ENCODE measurements at regions of chr13 and their contacts with region 1.

Region 1: GRCh38 chr13:42054798-42055499 is 6.5 kb downstream of the DGKH start:
- DNase-seq: no peak
- H3K4me3 ChIP-seq: no peak overlapping the region
- H3K4me3 Mint-ChIP-seq: no peak overlapping the region
- H3K27ac ChIP-seq: no peak overlapping the region
- H3K27ac Mint-ChIP-seq: no peak overlapping the region
- H3K4me1 ChIP-seq: peaks cover 18% of the 10 kb centered on the region
- H3K4me1 Mint-ChIP-seq: peaks cover 12 to 34% (median 17%) of the 10 kb centered on the region in 4 donors
- H3K27me3 ChIP-seq: no peaks in the 10 kb centered on the region
- H3K27me3 Mint-ChIP-seq: no peaks in the 10 kb centered on the region

Region 2: DNA sequence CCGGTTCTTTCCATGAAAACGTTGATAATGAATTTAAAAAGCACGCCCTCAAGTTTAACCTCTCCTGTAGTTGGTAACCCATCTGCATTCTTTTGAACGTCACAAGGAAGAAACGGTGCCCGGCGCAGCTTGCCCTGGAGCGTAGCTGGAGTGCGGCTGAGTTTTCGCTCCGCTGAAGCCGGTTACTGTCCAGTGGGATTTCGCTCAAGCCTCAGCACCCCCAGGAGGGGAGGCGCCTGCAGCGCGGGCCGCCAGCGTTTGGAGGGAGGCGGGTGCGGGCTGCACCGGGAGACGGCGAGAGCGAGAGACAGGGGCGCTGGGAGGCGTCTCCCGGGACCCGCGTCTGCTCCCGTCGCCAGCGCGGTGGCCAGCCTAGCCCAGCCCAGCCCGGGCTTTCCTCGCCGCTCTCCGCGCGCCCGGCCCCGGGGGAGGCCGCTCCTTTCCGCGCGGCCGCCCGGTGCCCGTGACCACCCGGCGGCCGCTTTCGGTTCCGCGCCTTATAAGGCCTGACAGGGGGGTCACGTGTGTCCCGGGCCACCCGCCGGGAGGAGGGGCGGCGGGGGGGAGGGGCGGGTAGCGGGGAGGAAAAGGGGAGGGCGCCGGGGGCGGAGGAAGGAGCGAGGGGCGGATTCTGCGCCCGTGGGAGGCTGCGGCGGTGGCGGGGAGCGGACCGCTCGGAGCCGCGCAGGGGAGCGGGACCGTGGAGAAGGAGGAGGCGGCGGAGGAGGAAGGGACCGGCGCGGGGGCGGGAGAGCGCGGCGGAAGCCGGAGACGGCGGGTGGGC is 14.8 kb before region 1 on chr13:
- CTCF ChIA-PET with region 1: no interaction called
- POLR2A ChIA-PET with region 1: no interaction called
- intact Hi-C with region 1: loop called (anchors 1 kb)
- DNase-seq: peak; percentile 84 to 87 (median 86)
- H3K4me3 ChIP-seq: peak overlapping the region; percentile 58 to 82
- H3K4me3 Mint-ChIP-seq: peak overlapping the region; percentile 84 to 94 (median 92)
- H3K27ac ChIP-seq: peak overlapping the region; percentile 65
- H3K27ac Mint-ChIP-seq: peak overlapping the region; percentile 86 to 95 (median 89)
- H3K4me1 ChIP-seq: peaks cover 13% of the 10 kb centered on the region
- H3K4me1 Mint-ChIP-seq: peaks cover 17 to 24% (median 19%) of the 10 kb centered on the region in 4 donors
- H3K27me3 ChIP-seq: no peaks in the 10 kb centered on the region
- H3K27me3 Mint-ChIP-seq: no peaks in the 10 kb centered on the region

Region 3: DNA sequence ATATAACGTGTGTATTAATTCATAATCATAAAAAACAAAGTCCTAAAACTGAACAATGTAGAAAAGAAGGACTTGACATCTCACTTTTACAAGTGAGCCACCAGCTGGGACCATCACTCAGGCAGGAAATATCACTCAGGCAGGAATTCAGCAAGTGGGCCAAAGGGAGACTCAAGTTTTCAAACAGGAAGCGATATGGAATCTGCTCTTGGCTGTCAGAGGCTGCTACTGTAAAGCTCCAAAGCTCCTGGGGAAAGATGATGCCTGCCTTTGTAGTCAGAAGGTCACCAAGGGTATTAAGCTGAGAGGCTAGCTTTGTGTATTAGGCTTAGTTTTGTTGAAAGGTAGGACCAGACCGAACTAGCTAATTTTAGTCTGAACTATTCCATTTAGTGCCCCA is 211.5 kb after region 1 on chr13:
- CTCF ChIA-PET with region 1: no interaction called
- POLR2A ChIA-PET with region 1: no interaction called
- intact Hi-C with region 1: no loop called
- DNase-seq: no peak
- H3K4me3 ChIP-seq: no peak overlapping the region
- H3K4me3 Mint-ChIP-seq: no peak overlapping the region
- H3K27ac ChIP-seq: no peak overlapping the region
- H3K27ac Mint-ChIP-seq: no peak overlapping the region
- H3K4me1 ChIP-seq: peaks cover 10% of the 10 kb centered on the region
- H3K4me1 Mint-ChIP-seq: peaks cover 10 to 14% (median 13%) of the 10 kb centered on the region in 4 donors
- H3K27me3 ChIP-seq: no peaks in the 10 kb centered on the region
- H3K27me3 Mint-ChIP-seq: peaks cover 0 to 2% of the 10 kb centered on the region in 2 donors